Colonic mucosa (tissue), 4 donors: ENCODE measurements at regions of chr2 and their contacts with region 1.

Region 1: DNA sequence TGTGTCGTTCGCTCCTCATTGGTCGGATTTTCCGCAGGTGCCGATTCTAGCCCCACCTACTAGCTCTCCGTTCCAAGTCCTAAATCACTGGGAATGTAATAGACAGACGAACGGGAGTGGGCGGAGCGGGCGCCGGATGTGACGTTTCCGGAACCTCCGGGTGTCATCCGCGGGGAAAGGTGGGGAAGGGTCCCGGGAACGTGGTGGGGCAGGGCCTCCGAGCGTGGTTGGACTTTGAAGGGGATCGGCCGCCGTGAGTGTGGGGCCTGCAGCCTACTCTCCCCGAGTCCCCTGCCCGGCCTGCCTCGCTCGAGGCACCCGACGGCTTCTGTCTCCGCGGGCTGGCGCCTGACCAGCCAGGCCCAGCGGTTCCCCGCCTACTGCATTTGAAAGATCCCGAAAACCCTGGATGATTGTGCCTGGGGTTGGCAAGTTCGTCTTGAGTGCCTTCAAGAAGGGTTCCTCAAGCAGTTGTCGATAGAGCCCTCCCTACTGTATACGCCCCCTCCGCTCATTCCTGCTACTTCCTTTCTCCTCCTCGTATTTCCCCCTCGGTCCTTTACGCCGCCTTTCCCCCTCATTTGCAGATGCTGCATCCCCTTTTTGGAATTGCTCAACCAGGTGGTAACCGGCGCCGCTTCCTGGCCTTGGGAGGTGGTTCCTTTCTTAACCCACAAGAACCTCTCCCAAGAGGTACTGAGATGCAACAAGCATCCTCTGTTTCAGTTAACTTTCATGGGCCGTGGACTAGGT is at the start of gene STAMBP:
- DNase-seq: peak; percentile 99
- H3K4me3 ChIP-seq: peak within 1 kb of the TSS; percentile 71
- H3K27ac ChIP-seq: peak within 1 kb of the TSS; percentile 88
- H3K4me1 ChIP-seq: peaks cover 6% of the 10 kb centered on the region
- H3K27me3 ChIP-seq: no peaks in the 10 kb centered on the region
- CTCF ChIP-seq: no peak
- total RNA-seq, gene STAMBP: 49.5 to 54.7 TPM

Region 2: GRCh38 chr2:73926493-73927338 is 97.7 kb after region 1 on chr2 and contains the start of gene DGUOK:
- intact Hi-C with region 1: loop called (anchors 10 kb)
- DNase-seq: peak; percentile 99
- H3K4me3 ChIP-seq: peak within 1 kb of the TSS; percentile 75
- H3K27ac ChIP-seq: peak within 1 kb of the TSS; percentile 96
- H3K4me1 ChIP-seq: peaks cover 12% of the 10 kb centered on the region
- H3K27me3 ChIP-seq: no peaks in the 10 kb centered on the region
- CTCF ChIP-seq: no peak
- total RNA-seq, gene DGUOK: 55.0 to 56.3 TPM

Region 3: DNA sequence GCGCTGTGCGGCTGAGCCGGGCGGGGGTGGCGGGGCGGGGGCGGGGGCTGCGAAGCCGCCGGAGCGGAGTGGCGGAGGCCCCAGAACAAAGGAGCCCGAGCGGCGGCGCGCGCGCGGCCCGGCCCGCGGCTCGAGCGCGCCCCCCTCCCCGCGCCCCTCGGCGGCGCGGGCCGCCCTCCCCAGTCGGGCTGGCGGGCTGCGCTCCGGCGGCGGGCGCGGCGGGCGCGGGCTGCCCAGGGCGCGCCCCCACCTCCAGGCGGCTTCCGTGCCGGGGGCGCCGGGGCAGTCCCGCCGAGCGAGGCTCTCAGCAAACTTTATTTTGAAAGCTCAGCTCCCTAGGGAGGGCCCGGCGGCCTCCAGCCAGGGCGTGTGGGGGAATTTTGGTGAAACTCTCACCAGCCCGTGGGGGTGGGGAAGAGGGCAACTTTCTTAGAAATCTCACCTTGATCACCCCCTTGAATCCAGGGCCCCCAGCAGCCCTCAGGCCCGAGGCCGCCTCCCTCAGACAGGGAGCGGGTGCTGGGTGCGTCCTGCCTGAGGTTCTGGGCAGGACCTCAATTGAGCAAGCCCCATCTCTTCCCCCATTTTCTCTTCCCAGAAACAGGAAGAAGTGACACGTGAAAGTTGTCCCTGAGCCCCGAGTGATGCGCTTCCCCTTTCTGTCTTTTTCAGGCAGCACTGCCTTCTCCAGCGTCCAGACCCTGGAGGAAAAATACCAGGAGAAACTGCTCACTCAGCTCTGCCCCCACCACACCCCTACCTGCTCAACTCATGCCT is 156.5 kb after region 1 on chr2:
- intact Hi-C with region 1: loop called (anchors 10 kb)
- DNase-seq: peak; percentile 59
- H3K4me3 ChIP-seq: peak overlapping the region; percentile 52
- H3K27ac ChIP-seq: peak overlapping the region; percentile 76
- H3K4me1 ChIP-seq: peaks cover 35% of the 10 kb centered on the region
- H3K27me3 ChIP-seq: no peaks in the 10 kb centered on the region
- CTCF ChIP-seq: no peak

Region 4: DNA sequence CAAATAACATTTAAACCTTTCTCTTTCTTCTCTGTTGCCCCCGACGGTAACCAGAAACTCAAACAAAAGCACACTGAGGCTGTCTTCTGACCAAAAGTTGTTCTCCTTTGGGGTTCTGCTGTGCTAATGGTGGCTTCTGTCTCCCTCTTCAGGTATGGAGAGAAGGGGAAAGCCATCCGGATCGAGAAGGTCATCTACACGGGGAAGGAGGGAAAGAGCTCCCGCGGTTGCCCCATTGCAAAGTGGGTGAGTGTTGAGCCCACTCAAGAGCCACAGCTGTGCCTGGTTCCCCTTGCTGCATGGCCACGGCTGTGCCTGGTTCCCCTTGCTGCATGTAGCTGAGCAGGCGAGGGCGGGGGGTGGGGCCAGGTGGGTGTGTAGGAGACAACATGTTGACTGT is 251.4 kb after region 1 on chr2:
- intact Hi-C with region 1: loop called (anchors 10 kb)
- DNase-seq: no peak
- H3K4me3 ChIP-seq: no peak overlapping the region
- H3K27ac ChIP-seq: no peak overlapping the region
- H3K4me1 ChIP-seq: no peaks in the 10 kb centered on the region
- H3K27me3 ChIP-seq: no peaks in the 10 kb centered on the region
- CTCF ChIP-seq: no peak

Region 5: DNA sequence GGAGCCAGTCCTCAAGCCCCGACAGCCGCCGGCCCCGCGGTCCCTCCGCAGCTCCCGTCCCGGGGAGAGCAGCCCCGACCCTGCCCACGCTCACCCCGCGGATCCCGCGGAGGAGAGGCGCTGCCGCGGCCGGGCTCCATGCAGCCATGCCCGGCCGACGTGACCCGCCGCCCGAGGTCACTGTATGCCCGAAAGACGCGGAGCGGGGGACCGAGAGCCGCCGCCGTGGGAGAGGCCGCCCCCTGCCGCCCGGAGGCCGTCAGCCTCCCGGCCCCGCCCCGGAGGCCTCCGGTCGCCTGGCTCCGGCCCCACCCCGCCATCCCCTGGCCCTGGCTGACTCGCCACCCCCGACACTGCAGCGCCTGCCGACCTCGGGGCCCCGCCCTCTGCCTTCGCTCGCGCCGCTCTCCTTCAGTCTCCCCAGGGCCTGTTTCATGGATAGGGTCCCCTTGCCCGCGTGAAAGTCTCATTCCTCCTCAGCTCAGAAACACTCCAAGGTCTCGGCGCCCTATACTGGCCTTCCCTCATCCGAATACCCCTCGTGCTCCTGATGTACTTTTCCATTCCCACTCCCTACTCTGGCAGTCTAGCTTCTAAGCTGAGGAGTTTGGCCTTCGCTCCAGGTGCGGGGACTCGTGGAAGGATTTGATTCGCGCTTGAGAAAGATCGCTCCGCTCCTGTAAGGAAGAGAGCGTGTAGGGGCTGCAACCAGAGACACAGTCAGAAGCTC is 318.9 kb after region 1 on chr2 and contains the start of gene BOLA3:
- intact Hi-C with region 1: loop called (anchors 10 kb)
- DNase-seq: peak; percentile 89
- H3K4me3 ChIP-seq: peak within 1 kb of the TSS; percentile 75
- H3K27ac ChIP-seq: no peak within 1 kb of the TSS
- H3K4me1 ChIP-seq: peaks cover 6% of the 10 kb centered on the region
- H3K27me3 ChIP-seq: no peaks in the 10 kb centered on the region
- CTCF ChIP-seq: peak; percentile 56
- total RNA-seq, gene BOLA3: 44.8 to 95.1 TPM

Region 6: DNA sequence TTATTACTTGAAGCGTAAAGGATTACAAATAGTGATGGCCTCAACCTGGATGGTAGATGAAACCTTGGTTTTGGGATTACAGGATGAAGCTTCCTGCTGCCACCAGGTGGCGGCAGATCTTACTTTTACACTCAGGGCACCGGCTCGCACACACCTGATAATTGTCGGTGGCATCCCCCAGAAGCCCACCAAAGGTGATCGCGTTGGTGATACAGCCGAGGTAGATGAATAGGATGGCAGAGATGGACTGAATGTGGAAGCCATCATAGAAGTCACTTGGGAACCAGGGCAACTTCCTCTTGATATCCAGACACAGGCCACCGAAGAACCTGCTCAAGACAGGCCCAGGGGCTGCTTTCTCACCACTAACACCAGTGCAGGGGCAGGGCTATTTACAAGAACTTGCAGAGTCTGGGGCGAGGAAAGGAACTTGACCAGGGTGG is 421.2 kb after region 1 on chr2:
- intact Hi-C with region 1: loop called (anchors 10 kb)
- DNase-seq: peak; percentile 41
- H3K4me3 ChIP-seq: no peak overlapping the region
- H3K27ac ChIP-seq: no peak overlapping the region
- H3K4me1 ChIP-seq: no peaks in the 10 kb centered on the region
- H3K27me3 ChIP-seq: no peaks in the 10 kb centered on the region
- CTCF ChIP-seq: peak; percentile 68

Region 7: GRCh38 chr2:74334931-74335333 is 505.9 kb after region 1 on chr2:
- intact Hi-C with region 1: loop called (anchors 10 kb)
- DNase-seq: peak; percentile 84
- H3K4me3 ChIP-seq: no peak overlapping the region
- H3K27ac ChIP-seq: no peak overlapping the region
- H3K4me1 ChIP-seq: no peaks in the 10 kb centered on the region
- H3K27me3 ChIP-seq: no peaks in the 10 kb centered on the region
- CTCF ChIP-seq: peak; percentile 96